WTC11 (cell line): ENCODE measurements at regions of chr1 and their contacts with region 1.

Region 1: GRCh38 chr1:39098546-39099250 is 72.5 kb downstream of the NDUFS5 start:
- DNase-seq: peak; percentile 76
- ATAC-seq: peak; percentile 85
- H3K4me3 Mint-ChIP-seq: no peak overlapping the region
- H3K27ac Mint-ChIP-seq: peak overlapping the region; percentile 83; the same call in 1 of the 2 replicates
- H3K4me1 Mint-ChIP-seq: peaks cover 21% of the 10 kb centered on the region
- H3K27me3 Mint-ChIP-seq: no peaks in the 10 kb centered on the region
- CTCF ChIP-seq: peak; percentile 42; the same call in 1 of the 2 replicates

Region 2: GRCh38 chr1:39081266-39082009 is 17.3 kb before region 1 on chr1:
- CTCF ChIA-PET with region 1: interaction called, 18 read pairs
- POLR2A ChIA-PET with region 1: interaction called, 3 read pairs
- DNase-seq: peak; percentile 64
- ATAC-seq: peak; percentile 56
- H3K4me3 Mint-ChIP-seq: no peak overlapping the region
- H3K27ac Mint-ChIP-seq: no peak overlapping the region
- H3K4me1 Mint-ChIP-seq: peaks cover 12% of the 10 kb centered on the region
- H3K27me3 Mint-ChIP-seq: peaks cover 34% of the 10 kb centered on the region
- CTCF ChIP-seq: no peak

Region 3: GRCh38 chr1:39183503-39184353 is 85.0 kb after region 1 on chr1:
- CTCF ChIA-PET with region 1: interaction called, 19 read pairs
- POLR2A ChIA-PET with region 1: interaction called, 5 read pairs
- DNase-seq: peak; percentile 52
- ATAC-seq: peak; percentile 94
- H3K4me3 Mint-ChIP-seq: no peak overlapping the region
- H3K27ac Mint-ChIP-seq: peak overlapping the region; percentile 65
- H3K4me1 Mint-ChIP-seq: peaks cover 46% of the 10 kb centered on the region
- H3K27me3 Mint-ChIP-seq: no peaks in the 10 kb centered on the region
- CTCF ChIP-seq: no peak

Region 4: GRCh38 chr1:39214998-39215873 is 116.5 kb after region 1 on chr1:
- CTCF ChIA-PET with region 1: interaction called, 20 read pairs
- POLR2A ChIA-PET with region 1: no interaction called
- DNase-seq: no peak
- ATAC-seq: peak; percentile 59
- H3K4me3 Mint-ChIP-seq: no peak overlapping the region
- H3K27ac Mint-ChIP-seq: peak overlapping the region; percentile 68
- H3K4me1 Mint-ChIP-seq: peaks cover 46% of the 10 kb centered on the region
- H3K27me3 Mint-ChIP-seq: no peaks in the 10 kb centered on the region
- CTCF ChIP-seq: no peak

Region 5: DNA sequence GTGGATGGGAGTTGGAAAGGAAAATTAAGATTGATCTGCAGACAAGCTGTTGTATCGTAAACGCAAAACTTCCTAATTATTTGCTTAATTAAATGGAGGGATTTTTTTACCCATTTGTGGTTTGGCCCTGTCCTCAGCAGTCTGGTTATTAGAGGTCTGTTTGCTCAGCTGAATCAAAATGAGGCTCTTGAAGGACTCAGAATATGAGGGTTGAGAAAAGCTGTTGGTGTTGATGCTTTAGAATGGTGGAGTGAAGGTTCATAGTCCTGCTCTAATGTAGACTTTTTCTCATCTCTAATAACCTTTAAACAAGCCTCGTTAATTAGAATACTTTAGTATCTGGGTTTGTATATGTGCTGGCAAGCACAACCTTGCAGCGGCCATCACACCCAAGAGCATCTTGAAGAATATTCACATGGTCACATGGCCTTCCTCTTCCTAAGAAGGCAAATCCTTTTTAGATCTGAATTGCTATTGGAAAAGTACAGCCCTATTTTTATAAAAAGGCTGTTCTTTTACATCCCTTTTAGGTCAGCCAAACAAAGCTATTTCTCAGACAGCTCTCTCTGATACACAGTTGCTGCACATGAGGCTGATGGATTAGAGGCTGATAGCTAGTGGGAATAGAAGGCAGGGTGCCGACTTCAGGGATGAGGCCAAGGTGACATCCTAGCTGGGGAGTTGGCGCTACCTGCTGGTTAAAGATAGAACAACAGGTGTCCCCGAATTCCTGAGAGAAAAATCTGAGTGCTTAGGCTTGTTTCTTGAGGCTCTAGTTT is 159.6 kb after region 1 on chr1:
- CTCF ChIA-PET with region 1: interaction called, 71 read pairs
- POLR2A ChIA-PET with region 1: interaction called, 4 read pairs
- DNase-seq: peak; percentile 82
- ATAC-seq: peak; percentile 90
- H3K4me3 Mint-ChIP-seq: no peak overlapping the region
- H3K27ac Mint-ChIP-seq: peak overlapping the region; percentile 91
- H3K4me1 Mint-ChIP-seq: peaks cover 14% of the 10 kb centered on the region
- H3K27me3 Mint-ChIP-seq: no peaks in the 10 kb centered on the region
- CTCF ChIP-seq: peak; percentile 86

Region 6: GRCh38 chr1:39337067-39337466 is 238.4 kb after region 1 on chr1:
- CTCF ChIA-PET with region 1: interaction called, 11 read pairs
- POLR2A ChIA-PET with region 1: no interaction called
- DNase-seq: no peak
- ATAC-seq: no peak
- H3K4me3 Mint-ChIP-seq: no peak overlapping the region
- H3K27ac Mint-ChIP-seq: no peak overlapping the region
- H3K4me1 Mint-ChIP-seq: no peaks in the 10 kb centered on the region
- H3K27me3 Mint-ChIP-seq: no peaks in the 10 kb centered on the region
- CTCF ChIP-seq: no peak

Region 7: DNA sequence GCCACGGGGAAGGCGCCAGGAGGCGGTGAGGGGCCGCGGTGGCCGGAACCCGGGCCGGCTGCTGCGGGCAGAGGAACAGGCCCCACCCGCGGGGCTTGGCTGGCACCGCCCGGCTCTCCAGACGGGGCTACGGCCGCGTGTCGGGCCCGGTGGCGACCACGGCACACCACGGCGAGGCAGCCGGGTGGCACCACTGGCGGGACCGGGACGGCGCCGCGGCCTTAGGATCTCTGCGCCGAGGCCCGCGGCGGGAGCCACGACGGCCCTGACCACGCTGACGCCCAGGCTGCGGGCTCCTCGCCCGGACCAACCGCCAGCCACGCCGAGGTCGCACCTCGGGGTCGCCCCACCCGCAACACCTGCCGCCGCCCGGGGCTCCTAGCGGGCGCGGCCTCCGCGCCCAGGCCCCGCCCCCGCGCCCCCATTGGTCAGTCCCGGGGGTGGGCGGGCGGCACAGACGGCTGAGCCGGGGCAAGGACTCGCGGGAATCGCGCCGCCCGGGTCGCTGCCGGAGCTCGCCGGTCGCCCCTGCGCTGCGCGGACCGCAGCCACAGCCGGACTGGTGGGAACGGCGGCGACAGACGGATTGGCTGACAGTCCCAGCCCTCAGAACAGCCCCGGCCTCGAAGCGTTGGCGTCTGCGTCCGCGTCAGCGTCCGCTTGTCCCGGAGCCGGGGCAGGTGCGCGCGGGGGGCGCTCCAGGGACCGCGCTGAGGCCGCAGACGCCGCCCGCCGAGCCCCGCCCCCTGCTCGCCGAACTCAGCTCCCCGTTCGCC is 392.6 kb after region 1 on chr1 and contains the start of gene BMP8A:
- CTCF ChIA-PET with region 1: interaction called, 20 read pairs
- POLR2A ChIA-PET with region 1: no interaction called
- DNase-seq: peak; percentile 78
- ATAC-seq: peak; percentile 77
- H3K4me3 Mint-ChIP-seq: peak within 1 kb of the TSS; percentile 81
- H3K27ac Mint-ChIP-seq: no peak within 1 kb of the TSS
- H3K4me1 Mint-ChIP-seq: peaks cover 5% of the 10 kb centered on the region
- H3K27me3 Mint-ChIP-seq: peaks cover 51% of the 10 kb centered on the region
- CTCF ChIP-seq: no peak
- total RNA-seq, gene BMP8A: 0.94 to 1.2 TPM (median 1.0 TPM) in 3 replicates